ENCODE measurements at regions of chr18 and their contacts with region 1.

Region 1: GRCh38 chr18:8844721-8845148 is 139.4 kb downstream of the MTCL1 start:
- DNase-seq: no peak
- H3K4me3 ChIP-seq: no peak overlapping the region
- H3K27ac ChIP-seq: no peak overlapping the region
- H3K4me1 ChIP-seq: peaks cover 0 to 36% (median 20%) of the 10 kb centered on the region in 4 donors
- H3K27me3 ChIP-seq: no peaks in the 10 kb centered on the region
- CTCF ChIP-seq: no peak
- EP300 ChIP-seq: no peak
- POLR2A ChIP-seq: no peak

Region 2: DNA sequence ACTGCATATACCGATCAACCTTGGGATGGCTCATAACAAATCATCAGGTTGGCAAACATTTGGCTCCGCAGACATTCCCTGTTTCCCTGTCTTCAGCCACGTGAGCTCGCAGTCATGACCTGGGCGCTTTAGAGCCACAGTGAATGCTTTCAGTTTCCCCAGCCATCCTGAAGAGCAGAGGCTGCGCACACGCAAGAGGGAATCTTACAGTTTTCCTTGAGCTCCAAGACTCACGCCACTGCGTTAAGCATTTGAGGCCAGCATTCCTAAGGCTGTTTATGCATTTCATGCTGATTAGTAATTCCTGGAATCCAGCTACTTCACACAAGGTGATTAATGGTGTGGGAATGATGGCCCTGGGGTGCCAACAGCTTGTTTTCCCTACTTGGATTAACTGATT is 44.3 kb before region 1 on chr18:
- intact Hi-C with region 1: no loop called
- DNase-seq: no peak
- H3K4me3 ChIP-seq: peak overlapping the region in 2 of 4 donors; percentile 6 to 16
- H3K27ac ChIP-seq: peak overlapping the region; percentile 80 to 93 (median 84)
- H3K4me1 ChIP-seq: peaks cover 0 to 68% (median 57%) of the 10 kb centered on the region in 4 donors
- H3K27me3 ChIP-seq: no peaks in the 10 kb centered on the region
- CTCF ChIP-seq: no peak
- EP300 ChIP-seq: peak in 1 of 4 donors; percentile 79
- POLR2A ChIP-seq: no peak

Region 3: DNA sequence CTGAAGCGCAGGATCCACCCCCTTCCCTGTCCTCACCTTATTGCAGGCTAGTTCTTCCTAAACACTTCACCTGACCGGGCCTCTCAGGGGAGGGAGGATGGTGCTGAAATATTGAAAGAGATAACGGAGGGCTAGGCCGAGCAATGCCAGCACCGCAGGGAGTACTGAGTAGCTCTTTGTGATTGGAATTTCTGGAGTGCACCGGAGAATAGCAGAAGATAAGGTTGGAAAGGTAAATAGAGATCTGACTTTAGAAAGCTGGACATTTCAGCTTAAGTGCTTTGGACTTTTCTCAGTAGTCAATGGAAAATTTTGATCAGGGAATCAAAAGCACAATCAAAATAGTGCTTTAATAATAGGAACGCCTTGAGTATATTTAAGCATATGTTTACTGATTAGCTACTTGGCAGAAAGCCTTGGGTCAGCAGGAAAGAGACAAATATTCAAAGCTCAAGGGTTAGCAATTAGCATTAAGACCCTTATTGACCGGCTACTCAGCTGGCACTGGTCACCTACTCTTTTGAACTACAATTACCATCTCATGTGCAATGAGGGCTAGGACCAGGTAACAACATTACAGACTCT is 114.9 kb after region 1 on chr18:
- intact Hi-C with region 1: loop called (anchors 5 kb)
- DNase-seq: no peak
- H3K4me3 ChIP-seq: no peak overlapping the region
- H3K27ac ChIP-seq: no peak overlapping the region
- H3K4me1 ChIP-seq: peaks cover 0 to 4% (median 0%) of the 10 kb centered on the region in 4 donors
- H3K27me3 ChIP-seq: no peaks in the 10 kb centered on the region
- CTCF ChIP-seq: no peak
- EP300 ChIP-seq: no peak
- POLR2A ChIP-seq: no peak